ENCODE measurements at regions of chr7 and their contacts with region 1.

Region 1: DNA sequence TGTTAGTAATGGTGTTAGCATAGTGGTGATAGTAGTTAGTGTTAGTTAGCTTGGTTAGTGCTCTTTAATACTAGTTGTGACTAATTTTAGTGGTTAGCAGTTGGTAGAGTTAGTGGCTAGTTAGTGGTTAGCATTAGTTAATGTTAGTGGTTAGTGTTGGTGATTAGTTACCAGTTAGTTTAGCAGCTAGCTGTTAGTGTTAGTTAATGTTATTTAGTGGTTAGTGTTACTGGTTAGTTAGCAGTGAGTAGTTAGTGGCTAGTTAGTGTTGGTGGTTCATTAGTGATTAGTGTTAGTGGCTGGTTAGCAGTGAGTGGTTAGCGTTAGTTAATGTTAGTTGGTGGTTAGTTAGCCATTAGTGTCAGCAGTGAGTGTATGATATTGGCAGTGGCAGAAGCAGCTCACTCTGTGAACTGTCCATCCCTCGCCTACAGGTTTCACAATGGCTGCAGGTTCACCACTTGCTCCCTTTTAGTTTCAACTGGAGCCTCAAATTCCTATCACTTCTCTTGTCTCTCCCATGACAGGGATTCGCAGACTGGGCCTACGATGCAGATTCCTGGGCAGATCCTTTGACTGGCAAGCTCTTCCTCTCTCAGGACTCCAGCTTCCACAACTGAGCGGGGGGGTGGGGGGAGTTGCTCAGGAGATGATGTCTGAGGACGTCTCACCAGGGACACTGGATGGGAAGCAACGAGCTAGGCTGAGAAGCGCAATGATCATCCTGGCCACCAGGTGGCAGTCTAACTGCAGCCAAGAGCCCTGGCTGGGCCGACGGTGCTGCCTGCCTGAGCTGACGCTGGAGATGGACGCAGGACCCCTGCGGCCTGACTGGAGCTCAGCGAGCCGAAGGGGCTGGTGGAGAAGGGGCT is 19.5 kb downstream of the GHRHR start:
- DNase-seq: peak; percentile 97
- ATAC-seq: peak; percentile 62
- H3K4me3 Mint-ChIP-seq: peak overlapping the region; percentile 67
- H3K27ac Mint-ChIP-seq: no peak overlapping the region
- H3K4me1 Mint-ChIP-seq: peaks cover 53% of the 10 kb centered on the region
- H3K27me3 Mint-ChIP-seq: peaks cover 7% of the 10 kb centered on the region
- CTCF ChIP-seq: peak; percentile 90

Region 2: DNA sequence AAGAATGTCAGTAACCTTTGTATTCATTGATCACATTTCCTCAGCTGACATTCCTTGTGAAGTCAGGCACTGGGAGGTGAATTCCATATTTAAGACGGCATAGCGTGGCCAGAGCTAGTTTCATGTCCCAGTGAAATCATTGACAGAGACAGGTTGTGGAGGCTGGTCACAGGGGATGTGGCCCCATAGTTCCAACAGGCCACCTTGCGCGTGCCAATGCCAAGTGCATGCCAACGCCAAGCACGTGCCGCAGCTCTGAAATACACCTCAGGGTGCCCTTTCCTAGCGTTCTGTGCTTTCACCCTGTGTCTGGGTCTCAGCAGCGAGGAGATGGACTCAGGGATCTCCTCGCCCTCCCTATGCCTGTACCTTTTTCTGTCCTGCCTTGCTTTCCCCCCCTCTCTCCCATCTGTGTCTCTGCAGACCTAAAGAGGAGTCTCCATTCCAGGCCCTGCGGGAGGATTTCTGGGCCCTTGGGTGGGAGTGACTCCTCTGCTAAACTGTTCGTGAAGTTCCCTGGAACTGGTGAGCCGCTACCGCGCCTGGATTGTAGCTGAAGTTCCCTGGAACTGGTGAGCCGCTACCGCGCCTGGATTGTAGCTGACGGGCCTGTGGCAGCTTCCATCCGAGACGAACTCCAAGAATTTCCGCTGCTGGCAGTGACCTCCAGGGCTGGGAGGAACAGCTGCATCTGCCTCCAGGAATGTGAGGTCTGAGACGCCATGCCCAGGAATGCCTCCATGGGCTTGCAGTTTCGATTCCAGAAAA is 51.9 kb before region 1 on chr7:
- CTCF ChIA-PET with region 1: interaction called, 11 read pairs
- POLR2A ChIA-PET with region 1: no interaction called
- DNase-seq: no peak
- ATAC-seq: no peak; the same call in 1 of the 2 replicates
- H3K4me3 Mint-ChIP-seq: no peak overlapping the region
- H3K27ac Mint-ChIP-seq: no peak overlapping the region
- H3K4me1 Mint-ChIP-seq: 0 out of 2 replicates have a peak, but pooled peaks cover 4% of the 10 kb centered on the region
- H3K27me3 Mint-ChIP-seq: peaks cover 9% of the 10 kb centered on the region
- CTCF ChIP-seq: no peak

Region 3: GRCh38 chr7:31014826-31015225 is 31.5 kb after region 1 on chr7:
- CTCF ChIA-PET with region 1: interaction called, 15 read pairs
- POLR2A ChIA-PET with region 1: no interaction called
- DNase-seq: no peak
- ATAC-seq: no peak
- H3K4me3 Mint-ChIP-seq: no peak overlapping the region
- H3K27ac Mint-ChIP-seq: no peak overlapping the region
- H3K4me1 Mint-ChIP-seq: peaks cover 8% of the 10 kb centered on the region
- H3K27me3 Mint-ChIP-seq: no peaks in the 10 kb centered on the region
- CTCF ChIP-seq: no peak

Region 4: GRCh38 chr7:31043051-31043471 is 59.8 kb after region 1 on chr7:
- CTCF ChIA-PET with region 1: interaction called, 87 read pairs
- POLR2A ChIA-PET with region 1: no interaction called
- DNase-seq: peak; percentile 48
- ATAC-seq: peak; percentile 97
- H3K4me3 Mint-ChIP-seq: no peak overlapping the region
- H3K27ac Mint-ChIP-seq: no peak overlapping the region; the same call in 1 of the 2 replicates
- H3K4me1 Mint-ChIP-seq: peaks cover 25% of the 10 kb centered on the region
- H3K27me3 Mint-ChIP-seq: peaks cover 14% of the 10 kb centered on the region; the same call in 1 of the 2 replicates
- CTCF ChIP-seq: no peak

Region 5: DNA sequence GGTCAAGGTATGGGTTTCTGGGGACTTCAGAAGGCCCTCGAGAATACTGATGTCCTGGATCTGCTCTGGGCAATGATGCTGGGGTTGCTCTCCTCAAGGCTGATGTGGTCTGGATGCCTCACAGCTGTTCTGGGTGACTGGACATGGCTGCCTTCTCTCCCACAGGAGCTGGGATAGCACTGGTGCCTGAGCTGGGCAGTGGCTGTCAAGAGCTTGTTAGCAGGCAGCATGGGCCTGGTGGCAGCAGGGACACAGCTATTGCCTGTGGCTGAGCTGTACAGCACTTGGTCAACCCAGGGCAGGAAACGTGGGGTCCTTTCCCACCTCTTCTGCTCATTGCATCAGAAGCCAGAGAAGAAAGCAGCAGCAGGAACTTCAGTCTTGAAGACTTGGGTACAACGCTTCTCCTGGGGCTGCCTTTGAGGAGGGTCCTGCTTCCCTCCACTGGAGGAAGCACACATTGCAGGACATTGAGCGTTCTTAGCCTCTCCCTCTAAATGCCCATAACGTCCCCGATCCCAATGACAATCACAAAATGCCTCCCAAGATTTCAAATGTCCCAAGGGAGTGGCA is 81.8 kb after region 1 on chr7:
- CTCF ChIA-PET with region 1: interaction called, 223 read pairs
- POLR2A ChIA-PET with region 1: interaction called, 4 read pairs
- DNase-seq: no peak
- ATAC-seq: peak; percentile 62
- H3K4me3 Mint-ChIP-seq: no peak overlapping the region
- H3K27ac Mint-ChIP-seq: no peak overlapping the region
- H3K4me1 Mint-ChIP-seq: peaks cover 7% of the 10 kb centered on the region; the same call in 1 of the 2 replicates
- H3K27me3 Mint-ChIP-seq: no peaks in the 10 kb centered on the region
- CTCF ChIP-seq: no peak

Measured in WTC11 (cell line).